ENCODE measurements at regions of chr5 and their contacts with region 1.

Region 1: GRCh38 chr5:157148734-157149615 is 6.3 kb upstream of the MED7 start:
- DNase-seq: peak; percentile 71 to 81
- ATAC-seq: peak; percentile 90 to 94
- H3K4me3 ChIP-seq: no peak overlapping the region
- H3K27ac ChIP-seq: no peak overlapping the region
- H3K4me1 ChIP-seq: no peaks in the 10 kb centered on the region
- CTCF ChIP-seq: peak; percentile 94
- EP300 ChIP-seq: no peak
- POLR2A ChIP-seq: no peak
- RAD21 ChIP-seq: peak; percentile 84 to 88

Region 2: DNA sequence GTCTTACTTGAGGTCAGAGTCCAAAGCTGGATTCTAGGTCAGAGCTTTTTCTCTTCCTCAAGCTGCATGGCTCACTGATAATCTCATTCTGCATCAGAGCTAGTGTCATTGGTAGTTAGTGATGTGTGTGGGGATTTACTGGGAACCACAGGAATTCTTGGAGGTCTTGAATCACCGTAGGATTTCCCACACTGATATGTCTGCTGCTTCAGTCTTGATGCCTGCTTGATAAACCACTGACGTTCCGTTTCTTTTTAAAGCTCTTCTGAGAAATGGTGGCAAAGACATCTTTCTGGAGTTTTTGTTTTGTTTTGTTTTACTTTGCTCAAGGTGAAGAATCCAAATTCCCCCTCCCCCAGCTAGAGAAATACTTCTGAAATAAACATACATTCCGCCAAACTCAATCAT is 18.2 kb after region 1 on chr5:
- CTCF ChIA-PET with region 1: interaction called, 10 read pairs
- POLR2A ChIA-PET with region 1: no interaction called
- DNase-seq: no peak
- ATAC-seq: no peak
- H3K4me3 ChIP-seq: no peak overlapping the region
- H3K27ac ChIP-seq: no peak overlapping the region
- H3K4me1 ChIP-seq: no peaks in the 10 kb centered on the region
- CTCF ChIP-seq: no peak
- EP300 ChIP-seq: no peak
- POLR2A ChIP-seq: no peak
- RAD21 ChIP-seq: no peak

Region 3: GRCh38 chr5:157172403-157172802 is 23.4 kb after region 1 on chr5:
- CTCF ChIA-PET with region 1: interaction called, 10 read pairs
- POLR2A ChIA-PET with region 1: no interaction called
- DNase-seq: no peak
- ATAC-seq: 0 out of 6 replicates have a peak, but pooled peaks of 1 of the 2 experiments have one; percentile 39
- H3K4me3 ChIP-seq: no peak overlapping the region
- H3K27ac ChIP-seq: no peak overlapping the region
- H3K4me1 ChIP-seq: no peaks in the 10 kb centered on the region
- CTCF ChIP-seq: no peak
- EP300 ChIP-seq: no peak
- POLR2A ChIP-seq: no peak
- RAD21 ChIP-seq: no peak

Region 4: GRCh38 chr5:157312492-157312891 is 163.5 kb after region 1 on chr5:
- CTCF ChIA-PET with region 1: interaction called, 30 read pairs
- POLR2A ChIA-PET with region 1: no interaction called
- DNase-seq: peak; percentile 63 to 87
- ATAC-seq: peak; percentile 88 to 97
- H3K4me3 ChIP-seq: no peak overlapping the region
- H3K27ac ChIP-seq: no peak overlapping the region
- H3K4me1 ChIP-seq: no peaks in the 10 kb centered on the region
- CTCF ChIP-seq: peak; percentile 84
- EP300 ChIP-seq: no peak
- POLR2A ChIP-seq: no peak
- RAD21 ChIP-seq: peak; percentile 66 to 74